Calu3 (cell line): ENCODE measurements at regions of chr6 and their contacts with region 1.

Region 1: GRCh38 chr6:117449549-117450439 is 24.1 kb upstream of the ROS1 start:
- DNase-seq: peak; percentile 70
- H3K4me3 Mint-ChIP-seq: no peak overlapping the region
- H3K27ac Mint-ChIP-seq: peak overlapping the region; percentile 33
- H3K4me1 Mint-ChIP-seq: peaks cover 41% of the 10 kb centered on the region
- H3K27me3 Mint-ChIP-seq: no peaks in the 10 kb centered on the region
- CTCF ChIP-seq: peak; percentile 72

Region 2: GRCh38 chr6:117352466-117353081 is 97.2 kb before region 1 on chr6:
- CTCF ChIA-PET with region 1: interaction called, 3 read pairs
- intact Hi-C with region 1: loop called (anchors 2 kb)
- DNase-seq: peak; percentile 11
- H3K4me3 Mint-ChIP-seq: no peak overlapping the region
- H3K27ac Mint-ChIP-seq: no peak overlapping the region
- H3K4me1 Mint-ChIP-seq: peaks cover 8% of the 10 kb centered on the region
- H3K27me3 Mint-ChIP-seq: no peaks in the 10 kb centered on the region
- CTCF ChIP-seq: peak; percentile 19

Region 3: DNA sequence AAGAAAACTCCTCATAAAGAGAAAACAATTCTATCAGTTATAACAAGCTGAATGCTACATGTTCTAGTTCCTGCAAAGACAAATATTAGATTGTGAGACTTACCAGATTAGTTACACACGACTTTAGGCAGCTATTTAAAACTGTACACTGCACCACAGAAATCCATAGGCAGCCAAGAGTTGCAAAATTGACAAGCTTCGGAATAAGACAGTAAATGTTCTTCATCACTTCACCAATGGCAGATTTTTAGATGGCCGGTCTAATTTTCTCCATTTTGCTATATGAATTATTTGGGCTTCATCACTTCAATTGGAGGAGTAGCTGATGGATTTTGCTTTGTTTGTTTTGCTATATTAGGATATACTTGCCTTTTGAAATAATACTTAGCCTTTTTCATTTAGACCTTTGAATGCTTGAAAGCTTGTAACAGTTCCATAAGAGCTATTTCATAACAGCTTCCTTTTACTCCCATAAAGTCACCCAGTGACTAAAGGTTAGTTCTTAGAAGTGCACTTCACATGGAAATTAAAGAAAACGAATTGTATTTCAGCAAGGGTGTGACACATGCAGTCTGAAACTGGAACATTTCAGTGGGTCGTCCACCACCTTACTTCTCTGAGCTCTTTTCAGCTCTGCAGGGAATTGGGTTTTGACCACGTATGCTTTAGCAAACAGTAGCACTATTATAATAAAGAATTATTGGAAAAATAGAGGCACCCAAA is 24.2 kb before region 1 on chr6 and contains the start of gene ROS1:
- CTCF ChIA-PET with region 1: interaction called, 18 read pairs
- intact Hi-C with region 1: loop called (anchors 2 kb)
- DNase-seq: peak; percentile 26
- H3K4me3 Mint-ChIP-seq: peak within 1 kb of the TSS; percentile 59
- H3K27ac Mint-ChIP-seq: peak within 1 kb of the TSS; percentile 87
- H3K4me1 Mint-ChIP-seq: peaks cover 56% of the 10 kb centered on the region
- H3K27me3 Mint-ChIP-seq: no peaks in the 10 kb centered on the region
- CTCF ChIP-seq: no peak
- total RNA-seq, gene ROS1: 5.1 and 8.1 TPM in 2 replicates

Region 4: GRCh38 chr6:117555882-117556498 is 106.2 kb after region 1 on chr6:
- CTCF ChIA-PET with region 1: interaction called, 4 read pairs
- intact Hi-C with region 1: loop called (anchors 1 kb)
- DNase-seq: peak; percentile 61
- H3K4me3 Mint-ChIP-seq: no peak overlapping the region
- H3K27ac Mint-ChIP-seq: peak overlapping the region; percentile 10
- H3K4me1 Mint-ChIP-seq: no peaks in the 10 kb centered on the region
- H3K27me3 Mint-ChIP-seq: no peaks in the 10 kb centered on the region
- CTCF ChIP-seq: peak; percentile 72